GM12878 (cell line): ENCODE measurements at regions of chr16 and their contacts with region 1.

Region 1: GRCh38 chr16:20300312-20301097 is 26.8 kb downstream of the GP2 start:
- DNase-seq: peak; percentile 46
- ATAC-seq: peak; percentile 97
- H3K4me3 ChIP-seq: no peak overlapping the region
- H3K27ac ChIP-seq: no peak overlapping the region
- H3K4me1 ChIP-seq: no peaks in the 10 kb centered on the region
- H3K27me3 ChIP-seq: no peaks in the 10 kb centered on the region; a peak in 1 of 4 replicates
- CTCF ChIP-seq: peak; percentile 85 to 91 (median 87)
- EP300 ChIP-seq: no peak
- POLR2A ChIP-seq: no peak
- RAD21 ChIP-seq: peak; percentile 88

Region 2: DNA sequence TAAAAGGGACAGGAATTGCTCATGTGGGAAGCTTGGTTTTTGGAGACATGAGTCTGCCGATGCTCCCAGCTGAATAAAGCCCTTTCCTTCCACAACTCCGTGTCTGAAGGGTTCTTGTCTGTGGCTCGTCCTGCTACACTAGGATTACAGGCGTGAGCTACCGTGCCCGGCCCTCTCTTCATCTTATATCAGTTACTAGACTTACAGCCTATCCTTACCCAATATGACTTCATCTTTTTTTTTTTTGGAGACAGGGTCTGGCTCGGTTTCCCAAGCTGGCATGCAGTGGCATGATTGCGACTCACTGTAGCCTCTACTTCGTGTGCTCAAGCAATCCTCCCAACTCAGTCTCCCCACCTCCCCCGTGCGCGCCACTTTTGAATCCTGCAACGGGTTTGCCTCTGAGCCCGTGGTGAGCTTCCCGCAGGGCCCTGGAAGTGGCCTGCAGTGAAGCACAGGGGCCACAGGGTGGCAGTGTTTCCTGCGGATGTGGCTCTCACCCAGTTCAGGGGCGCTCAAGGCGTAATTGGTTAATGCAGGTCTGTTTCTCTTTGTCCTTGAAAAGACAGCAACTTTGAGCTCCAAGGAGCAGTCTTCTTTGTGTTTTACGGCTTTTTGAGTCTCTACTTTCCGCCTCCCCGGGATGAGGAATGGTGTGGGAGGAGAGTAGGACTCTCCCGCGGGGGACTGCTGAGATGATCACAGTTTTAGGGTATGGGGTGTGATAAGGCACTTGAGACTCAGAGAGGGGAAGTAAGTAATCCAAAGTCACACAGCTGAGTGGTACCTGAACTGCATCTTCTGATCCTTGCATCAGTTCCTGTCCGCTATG is 393.1 kb before region 1 on chr16:
- CTCF ChIA-PET with region 1: interaction called, 212 read pairs
- POLR2A ChIA-PET with region 1: no interaction called
- RAD21 ChIA-PET with region 1: interaction called, 117 read pairs
- SMC1A ChIA-PET with region 1: interaction called, 103 read pairs
- in situ Hi-C with region 1: loop called (anchors 5 kb)
- intact Hi-C with region 1: loop called (anchors 1 kb)
- DNase-seq: peak; percentile 7
- ATAC-seq: peak; percentile 100
- H3K4me3 ChIP-seq: no peak overlapping the region
- H3K27ac ChIP-seq: no peak overlapping the region
- H3K4me1 ChIP-seq: no peaks in the 10 kb centered on the region
- H3K27me3 ChIP-seq: no peaks in the 10 kb centered on the region
- CTCF ChIP-seq: peak; percentile 94 to 98 (median 96); a peak in 5 of 6 replicates
- EP300 ChIP-seq: no peak
- POLR2A ChIP-seq: no peak
- RAD21 ChIP-seq: peak; percentile 92

Region 3: DNA sequence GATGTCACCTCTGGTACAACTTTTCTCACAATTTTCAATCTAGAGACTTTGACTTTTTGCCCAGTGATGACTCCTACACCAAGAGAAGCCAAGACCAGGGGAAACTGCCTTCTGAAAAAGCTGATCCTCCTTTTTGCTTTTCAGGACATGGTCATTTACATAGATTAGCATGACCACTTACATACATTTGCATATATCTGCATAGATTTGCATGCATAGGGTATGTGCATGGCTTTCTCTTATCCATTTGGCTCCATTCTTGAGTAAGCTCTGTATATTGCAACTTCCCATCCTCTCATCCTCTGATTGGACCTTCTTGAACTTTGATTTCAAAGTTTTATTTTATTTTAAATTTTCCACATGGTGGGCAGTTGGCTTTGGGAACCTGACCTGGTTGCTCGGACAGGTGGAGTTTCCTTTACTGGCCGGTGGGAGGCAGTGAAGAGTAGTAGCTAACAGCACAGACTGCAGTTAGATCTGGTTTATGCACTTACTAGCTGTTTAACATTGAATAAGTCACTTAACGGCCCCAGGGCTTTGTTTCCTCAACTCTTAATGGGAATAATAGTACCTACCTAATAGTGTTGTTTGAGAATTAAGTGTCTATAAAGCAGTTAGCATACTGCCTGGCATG is 319.8 kb before region 1 on chr16:
- CTCF ChIA-PET with region 1: interaction called, 8 read pairs
- POLR2A ChIA-PET with region 1: interaction called, 3 read pairs
- RAD21 ChIA-PET with region 1: interaction called, 15 read pairs
- SMC1A ChIA-PET with region 1: interaction called, 16 read pairs
- in situ Hi-C with region 1: no loop called
- intact Hi-C with region 1: loop called (anchors 1 kb)
- DNase-seq: no peak
- ATAC-seq: 0 out of 3 replicates have a peak, but pooled peaks have one; percentile 35
- H3K4me3 ChIP-seq: no peak overlapping the region
- H3K27ac ChIP-seq: no peak overlapping the region
- H3K4me1 ChIP-seq: no peaks in the 10 kb centered on the region
- H3K27me3 ChIP-seq: no peaks in the 10 kb centered on the region
- CTCF ChIP-seq: peak; percentile 25 to 49 (median 46)
- EP300 ChIP-seq: no peak
- POLR2A ChIP-seq: no peak
- RAD21 ChIP-seq: peak; percentile 35

Region 4: DNA sequence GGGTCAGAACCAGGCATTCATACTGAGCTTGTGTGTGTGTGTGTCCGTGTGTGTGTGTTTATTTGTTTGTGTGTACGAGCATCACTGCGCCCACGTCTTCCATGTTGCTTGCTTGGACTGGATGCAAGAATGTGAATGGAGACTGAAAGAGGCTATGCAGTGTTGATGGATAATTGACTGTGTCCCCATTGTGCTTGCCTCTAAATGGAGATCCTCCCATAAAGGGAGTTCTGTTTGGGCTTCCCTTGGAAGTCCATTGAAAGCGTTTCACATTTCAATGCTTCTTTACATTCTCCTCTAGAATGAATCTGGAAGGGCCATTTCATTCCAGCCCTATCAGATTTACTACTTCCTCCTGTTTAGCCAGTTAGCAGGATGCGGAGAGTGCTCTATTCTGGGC is 97.2 kb before region 1 on chr16:
- CTCF ChIA-PET with region 1: no interaction called
- POLR2A ChIA-PET with region 1: no interaction called
- RAD21 ChIA-PET with region 1: no interaction called
- SMC1A ChIA-PET with region 1: interaction called, 16 read pairs
- in situ Hi-C with region 1: no loop called
- intact Hi-C with region 1: no loop called
- DNase-seq: no peak
- ATAC-seq: no peak
- H3K4me3 ChIP-seq: no peak overlapping the region
- H3K27ac ChIP-seq: no peak overlapping the region
- H3K4me1 ChIP-seq: no peaks in the 10 kb centered on the region
- H3K27me3 ChIP-seq: no peaks in the 10 kb centered on the region
- CTCF ChIP-seq: no peak
- EP300 ChIP-seq: no peak
- POLR2A ChIP-seq: no peak
- RAD21 ChIP-seq: no peak